ENCODE measurements at regions of chr1 and their contacts with region 1.

Region 1: DNA sequence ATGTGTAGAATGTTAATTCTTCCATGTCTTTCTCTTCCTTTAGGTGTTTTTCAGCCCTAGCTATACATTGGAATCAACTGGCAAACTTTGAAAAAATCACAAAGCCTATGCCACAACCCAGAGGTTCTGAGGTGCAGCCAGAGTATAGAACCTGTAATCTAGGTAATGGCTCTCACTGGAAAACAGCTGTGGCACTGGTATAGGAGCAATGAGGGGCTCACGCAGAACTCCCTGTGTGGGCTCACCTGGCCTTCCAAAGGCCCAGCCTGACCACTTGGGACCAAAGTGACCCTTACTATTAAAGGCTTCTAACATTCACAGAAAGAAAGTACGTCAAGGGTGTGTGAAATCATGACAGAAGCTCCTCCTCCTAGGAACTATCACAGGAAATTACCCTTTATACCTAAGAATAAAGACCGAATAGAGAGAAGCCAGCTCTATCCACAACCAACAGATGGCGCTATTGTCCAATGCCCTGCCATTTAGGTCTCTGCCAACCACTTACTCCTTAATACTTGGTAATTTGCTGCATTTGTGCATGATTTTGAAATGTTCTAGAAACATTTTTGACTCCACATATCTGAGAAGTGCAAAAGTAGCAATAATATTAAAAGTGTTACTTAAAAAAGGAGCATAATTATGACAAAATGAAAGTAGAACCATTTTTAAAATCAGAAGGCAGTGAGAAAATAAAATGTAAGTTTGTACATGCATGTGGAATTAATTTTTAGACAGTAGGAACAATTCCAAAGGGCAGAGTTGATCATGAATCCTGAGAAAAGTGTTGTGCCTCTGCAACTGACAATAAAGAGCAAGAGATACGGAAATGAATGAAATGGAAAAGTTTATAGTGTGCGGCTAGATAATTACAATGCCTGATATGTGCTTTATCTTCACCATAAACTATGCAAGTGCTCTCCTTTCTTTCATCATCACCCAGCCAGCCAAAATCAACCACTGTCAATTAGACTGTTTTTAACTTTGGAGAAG is 93.1 kb upstream of the HAO2 start:
- DNase-seq: peak; percentile 63
- H3K4me3 ChIP-seq: no peak overlapping the region
- H3K27ac ChIP-seq: no peak overlapping the region
- H3K4me1 ChIP-seq: peaks cover 16% of the 10 kb centered on the region
- H3K27me3 ChIP-seq: peaks cover 9 to 18% of the 10 kb centered on the region in 2 experiments
- CTCF ChIP-seq: peak; percentile 84 to 87
- POLR2A ChIP-seq: no peak

Region 2: GRCh38 chr1:119188926-119189325 is 86.5 kb before region 1 on chr1:
- CTCF ChIA-PET with region 1: interaction called, 7 read pairs
- POLR2A ChIA-PET with region 1: no interaction called
- dilution Hi-C with region 1: no loop called
- intact Hi-C with region 1: loop called (anchors 5 kb)
- DNase-seq: no peak
- H3K4me3 ChIP-seq: no peak overlapping the region
- H3K27ac ChIP-seq: no peak overlapping the region
- H3K4me1 ChIP-seq: peaks cover 9% of the 10 kb centered on the region
- H3K27me3 ChIP-seq: no peaks in the 10 kb centered on the region
- CTCF ChIP-seq: no peak
- POLR2A ChIP-seq: no peak

Region 3: DNA sequence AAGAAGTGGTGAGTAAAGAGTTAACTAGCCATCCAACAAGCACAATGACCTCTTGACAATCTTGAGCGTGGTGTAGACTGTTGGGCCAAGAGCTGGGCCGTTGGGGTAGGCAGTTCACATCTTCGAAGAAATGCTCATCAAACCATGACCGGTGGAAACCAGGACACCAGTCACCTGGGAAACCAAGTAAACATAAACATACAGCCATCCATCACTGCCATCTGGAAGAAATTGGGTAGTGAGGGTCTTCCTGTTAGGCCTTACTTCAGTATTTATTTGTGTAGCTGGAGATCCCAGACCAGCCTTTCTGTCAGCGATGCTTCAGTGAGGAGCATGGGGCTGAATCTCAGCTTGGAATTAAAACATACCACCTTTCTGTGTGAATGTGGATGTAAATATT is 14.9 kb before region 1 on chr1:
- CTCF ChIA-PET with region 1: interaction called, 37 read pairs
- POLR2A ChIA-PET with region 1: no interaction called
- dilution Hi-C with region 1: no loop called
- intact Hi-C with region 1: no loop called
- DNase-seq: no peak
- H3K4me3 ChIP-seq: no peak overlapping the region
- H3K27ac ChIP-seq: no peak overlapping the region
- H3K4me1 ChIP-seq: no peaks in the 10 kb centered on the region
- H3K27me3 ChIP-seq: peaks cover 0 to 2% of the 10 kb centered on the region in 2 experiments
- CTCF ChIP-seq: no peak
- POLR2A ChIP-seq: no peak

Region 4: DNA sequence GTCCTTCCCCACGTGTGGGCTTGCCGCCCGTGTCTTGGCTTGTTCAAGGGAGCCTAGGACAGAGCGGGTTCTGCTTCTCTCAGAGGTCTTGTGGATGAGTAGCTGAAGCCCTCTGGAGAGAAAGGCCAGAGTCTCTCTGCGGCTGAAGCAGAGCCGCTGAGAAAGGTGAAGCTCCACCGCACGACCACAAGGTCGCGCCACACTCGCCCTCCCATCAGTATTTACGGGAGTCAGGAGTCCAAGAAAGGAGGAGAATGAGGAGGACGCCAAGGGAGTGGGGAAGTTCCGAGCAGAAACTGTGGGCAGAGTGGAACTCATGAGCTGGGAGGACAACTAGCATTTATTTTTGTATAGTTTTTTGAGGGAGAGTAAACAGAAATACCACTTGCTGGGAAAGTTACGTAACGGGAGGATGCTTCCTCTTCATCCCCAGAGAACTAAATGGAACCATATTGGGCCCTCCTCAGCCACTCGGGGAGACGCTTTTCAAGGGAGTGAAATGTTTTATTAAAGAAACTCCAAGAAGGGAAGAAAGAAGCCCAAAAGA is 41.5 kb after region 1 on chr1:
- CTCF ChIA-PET with region 1: interaction called, 10 read pairs
- POLR2A ChIA-PET with region 1: no interaction called
- dilution Hi-C with region 1: no loop called
- intact Hi-C with region 1: no loop called
- DNase-seq: no peak
- H3K4me3 ChIP-seq: no peak overlapping the region
- H3K27ac ChIP-seq: no peak overlapping the region
- H3K4me1 ChIP-seq: no peaks in the 10 kb centered on the region
- H3K27me3 ChIP-seq: peaks cover 0 to 2% of the 10 kb centered on the region in 2 experiments
- CTCF ChIP-seq: no peak
- POLR2A ChIP-seq: no peak

Region 5: DNA sequence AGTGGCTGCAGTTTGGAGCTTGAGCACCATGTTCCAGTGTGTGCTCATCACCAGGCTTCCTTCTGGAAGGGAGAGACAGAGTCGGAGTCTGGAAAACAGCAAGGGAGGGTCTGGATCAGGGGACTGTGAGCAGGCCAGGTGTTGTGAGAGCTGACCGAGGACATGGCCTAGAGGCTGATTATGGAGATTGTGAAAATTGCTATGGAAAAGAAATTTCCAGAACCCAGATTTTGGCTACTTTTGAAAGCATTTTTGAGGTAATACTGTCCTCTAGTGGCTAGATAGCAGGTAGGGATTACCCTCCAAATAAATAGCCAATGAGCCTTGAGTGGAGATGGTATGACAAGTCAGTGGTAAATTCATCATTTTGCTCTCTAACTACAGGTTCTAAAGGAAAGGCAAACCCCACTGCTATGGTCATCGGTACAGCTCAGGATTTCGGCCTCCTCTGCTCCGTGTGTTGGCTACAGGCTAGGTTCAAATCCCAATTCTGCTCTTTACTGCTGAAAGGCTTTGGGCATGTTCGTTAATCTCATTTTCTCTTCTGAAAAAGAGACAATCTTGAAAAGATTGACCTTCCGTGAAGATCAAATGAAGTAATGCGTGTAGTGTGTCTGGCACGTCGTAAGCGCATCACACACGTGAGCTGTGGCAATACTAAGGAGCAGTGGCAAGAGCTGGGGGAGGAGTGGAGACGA is 92.1 kb after region 1 on chr1:
- CTCF ChIA-PET with region 1: interaction called, 70 read pairs
- POLR2A ChIA-PET with region 1: no interaction called
- dilution Hi-C with region 1: no loop called
- intact Hi-C with region 1: loop called (anchors 1 kb)
- DNase-seq: peak; percentile 33
- H3K4me3 ChIP-seq: no peak overlapping the region
- H3K27ac ChIP-seq: no peak overlapping the region
- H3K4me1 ChIP-seq: no peaks in the 10 kb centered on the region
- H3K27me3 ChIP-seq: peaks cover 5 to 7% of the 10 kb centered on the region in 2 experiments
- CTCF ChIP-seq: peak; percentile 52 to 72
- POLR2A ChIP-seq: no peak

Region 6: DNA sequence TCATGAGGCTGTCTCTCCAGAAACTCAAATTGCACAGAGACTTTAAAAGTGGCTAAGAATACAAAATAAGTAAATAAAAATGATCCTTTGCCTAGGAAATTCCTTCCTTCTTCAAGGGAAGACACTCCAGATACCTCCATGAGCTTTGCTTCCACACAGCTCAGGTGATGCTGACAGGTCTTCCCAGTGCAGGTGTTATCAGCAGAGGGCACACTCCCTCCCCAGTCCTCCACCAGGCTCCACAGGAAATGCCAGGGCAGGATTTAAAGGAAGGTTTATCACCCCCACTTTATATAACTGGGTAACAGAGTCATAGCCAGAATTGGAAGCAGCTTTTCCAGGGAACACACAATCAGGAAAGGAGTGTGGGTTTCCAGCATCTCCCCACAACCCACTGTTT is 145.2 kb after region 1 on chr1:
- CTCF ChIA-PET with region 1: no interaction called
- POLR2A ChIA-PET with region 1: no interaction called
- dilution Hi-C with region 1: no loop called
- intact Hi-C with region 1: no loop called
- DNase-seq: no peak
- H3K4me3 ChIP-seq: no peak overlapping the region
- H3K27ac ChIP-seq: no peak overlapping the region
- H3K4me1 ChIP-seq: no peaks in the 10 kb centered on the region
- H3K27me3 ChIP-seq: no peaks in the 10 kb centered on the region
- CTCF ChIP-seq: no peak
- POLR2A ChIP-seq: no peak

Region 7: DNA sequence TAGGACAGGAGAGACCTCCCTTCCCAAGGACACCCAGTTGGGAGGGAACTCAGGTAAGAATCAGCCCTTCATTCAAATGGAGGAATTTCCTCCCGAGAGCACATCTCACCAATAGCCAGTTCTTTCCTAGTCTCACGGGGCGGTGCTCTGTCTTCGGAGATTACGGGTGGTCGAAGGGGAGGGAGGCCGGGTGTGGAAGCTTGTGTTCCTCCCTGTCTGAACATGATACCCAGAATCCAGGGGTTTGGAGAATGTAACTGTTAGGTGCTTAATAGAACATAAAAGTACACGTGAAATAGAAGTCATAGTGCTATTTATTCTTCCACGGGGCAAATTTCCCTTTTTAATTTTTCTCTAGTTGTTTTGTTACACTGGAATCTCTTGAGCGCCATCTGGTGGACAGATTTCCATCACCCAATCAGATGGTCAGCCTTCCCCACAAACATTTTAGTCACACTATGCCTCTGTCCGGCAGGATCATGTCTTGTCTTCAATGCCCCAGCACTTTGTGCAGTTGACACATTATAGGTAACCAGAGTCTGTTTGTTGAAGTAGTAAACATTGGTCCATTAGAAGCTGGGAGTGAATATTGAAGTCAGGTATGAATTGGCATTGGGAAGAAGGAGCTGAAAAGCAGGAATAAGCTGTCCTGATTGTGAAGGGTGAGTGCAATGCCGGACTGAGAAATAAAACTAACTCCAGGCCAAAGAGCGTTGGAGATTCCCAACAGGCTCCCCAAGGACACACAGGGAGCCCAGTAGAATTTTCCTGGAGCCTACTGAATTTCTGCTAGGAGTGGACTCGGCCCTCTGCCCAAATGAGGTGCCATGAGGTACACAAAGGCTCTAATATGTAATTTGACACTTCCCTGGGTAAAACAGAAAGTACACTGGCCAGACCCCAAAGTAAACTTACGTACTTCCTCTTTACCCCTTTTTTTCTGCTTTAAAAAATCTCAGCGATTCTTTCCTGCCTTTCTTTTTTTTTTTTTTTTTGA is 400.2 kb after region 1 on chr1:
- CTCF ChIA-PET with region 1: no interaction called
- POLR2A ChIA-PET with region 1: no interaction called
- dilution Hi-C with region 1: no loop called
- intact Hi-C with region 1: loop called (anchors 10 kb)
- DNase-seq: peak; percentile 92
- H3K4me3 ChIP-seq: peak overlapping the region; percentile 32 to 86 (median 66)
- H3K27ac ChIP-seq: peak overlapping the region; percentile 78
- H3K4me1 ChIP-seq: peaks cover 42% of the 10 kb centered on the region
- H3K27me3 ChIP-seq: peaks cover 4 to 6% of the 10 kb centered on the region in 2 experiments
- CTCF ChIP-seq: peak; percentile 64 to 77
- POLR2A ChIP-seq: no peak